ENCODE measurements at regions of chr18 and their contacts with region 1.

Region 1: DNA sequence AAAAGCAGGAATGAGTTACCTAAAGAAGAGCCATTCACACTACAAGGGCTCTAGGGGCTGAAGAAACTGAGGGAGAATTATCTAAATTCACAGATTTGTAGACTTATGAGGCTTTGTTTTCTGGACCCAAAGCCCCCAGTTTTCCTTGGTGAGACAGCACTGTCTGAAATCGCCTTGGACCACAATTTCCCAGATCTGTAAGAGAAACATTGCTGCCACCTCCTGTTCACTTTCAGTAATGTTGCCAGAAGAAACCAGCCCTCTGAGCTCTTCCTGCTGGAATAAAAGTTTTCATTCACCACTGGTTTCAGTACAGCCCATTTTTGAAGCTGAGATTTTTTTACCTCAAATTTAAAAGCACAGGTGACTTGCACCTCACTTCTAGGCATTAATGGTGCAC is 169.2 kb downstream of the CDH20 start:
- H3K4me3 Mint-ChIP-seq: no peak overlapping the region
- H3K27ac Mint-ChIP-seq: no peak overlapping the region
- H3K4me1 Mint-ChIP-seq: no peaks in the 10 kb centered on the region
- H3K27me3 Mint-ChIP-seq: peaks cover 12% of the 10 kb centered on the region

Region 2: DNA sequence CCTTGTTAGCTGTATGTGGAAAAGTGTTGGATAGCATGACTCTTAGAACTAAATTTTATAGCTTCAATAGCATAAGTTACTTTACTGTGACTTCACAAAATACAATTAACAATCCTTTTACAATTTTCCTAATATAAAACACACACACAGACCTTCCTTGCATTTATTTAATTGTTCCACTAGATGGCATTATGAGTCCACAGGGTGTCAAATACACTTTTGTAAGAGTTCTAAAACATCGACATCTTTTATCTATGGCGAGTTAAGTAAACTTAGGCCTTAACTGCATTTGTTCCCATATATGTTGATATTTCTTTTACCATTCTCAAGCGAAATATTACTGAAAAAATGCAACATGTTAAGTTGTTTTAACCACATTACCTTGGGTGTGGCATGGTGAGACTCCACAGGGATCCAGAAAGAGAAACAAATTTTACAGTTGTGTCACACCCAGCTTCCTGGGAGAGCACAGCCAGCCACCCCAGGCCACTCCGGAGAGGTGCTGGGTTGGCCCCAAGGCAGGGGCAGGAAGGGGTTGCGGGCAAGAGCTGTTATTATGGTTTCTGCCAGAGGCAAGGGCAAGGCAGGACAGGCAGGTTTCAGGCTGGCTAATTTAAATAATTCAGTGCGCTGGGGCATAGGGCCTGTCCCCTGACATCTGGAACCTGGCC is 817.5 kb before region 1 on chr18:
- intact Hi-C with region 1: loop called (anchors 5 kb)
- H3K4me3 Mint-ChIP-seq: no peak overlapping the region
- H3K27ac Mint-ChIP-seq: no peak overlapping the region
- H3K4me1 Mint-ChIP-seq: no peaks in the 10 kb centered on the region
- H3K27me3 Mint-ChIP-seq: no peaks in the 10 kb centered on the region

Region 3: GRCh38 chr18:61085761-61086160 is 416.7 kb before region 1 on chr18:
- intact Hi-C with region 1: loop called (anchors 5 kb)
- H3K4me3 Mint-ChIP-seq: no peak overlapping the region
- H3K27ac Mint-ChIP-seq: no peak overlapping the region
- H3K4me1 Mint-ChIP-seq: no peaks in the 10 kb centered on the region
- H3K27me3 Mint-ChIP-seq: no peaks in the 10 kb centered on the region

Region 4: DNA sequence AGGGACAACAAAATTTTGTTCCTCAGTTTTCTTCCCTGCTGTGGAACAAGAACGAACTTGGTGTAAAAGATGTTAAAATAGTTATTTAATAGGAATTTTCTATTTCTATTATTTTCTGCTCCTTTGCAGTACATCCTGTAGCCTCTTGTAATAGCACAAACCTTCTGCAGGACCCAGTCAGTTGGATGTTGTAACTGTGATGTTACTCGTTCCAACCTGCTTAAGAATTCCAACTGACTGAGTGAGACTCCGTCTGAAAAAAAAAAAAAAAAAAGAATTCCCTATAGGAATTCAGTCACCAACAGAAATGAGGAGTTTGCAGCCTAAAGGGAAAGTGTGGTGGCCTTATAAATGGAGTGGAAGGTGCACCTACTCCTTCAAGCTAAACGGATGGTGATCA is 215.6 kb before region 1 on chr18:
- intact Hi-C with region 1: no loop called
- H3K4me3 Mint-ChIP-seq: no peak overlapping the region
- H3K27ac Mint-ChIP-seq: no peak overlapping the region
- H3K4me1 Mint-ChIP-seq: no peaks in the 10 kb centered on the region
- H3K27me3 Mint-ChIP-seq: no peaks in the 10 kb centered on the region

Region 5: DNA sequence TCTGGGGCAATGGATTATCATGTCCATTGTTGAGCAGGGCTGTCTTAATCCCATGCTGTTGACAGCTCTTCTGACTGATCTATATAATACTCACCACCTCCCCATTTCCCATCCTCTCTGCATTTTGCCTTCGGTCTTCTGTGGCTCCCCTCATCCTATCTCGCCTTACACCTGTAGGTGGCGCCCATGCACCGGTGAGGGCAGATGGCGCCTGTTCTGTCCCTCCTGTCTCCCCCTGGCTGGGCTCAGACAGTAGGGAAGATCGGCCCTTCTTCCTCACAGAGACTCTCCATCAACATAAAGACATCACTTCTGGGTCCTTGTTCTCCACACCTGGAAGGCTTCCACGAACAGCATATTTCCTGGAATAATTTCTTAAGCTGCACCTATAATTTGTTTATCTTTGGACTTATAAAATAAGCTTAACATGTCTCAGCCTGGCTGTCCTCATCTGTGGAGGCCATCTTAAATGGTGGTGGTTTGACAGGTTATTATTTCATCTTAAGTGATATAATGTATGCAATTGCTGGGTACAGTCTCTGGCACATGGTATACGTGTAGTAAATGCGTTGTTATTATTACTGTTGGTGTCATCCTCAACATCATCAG is 180.1 kb before region 1 on chr18:
- intact Hi-C with region 1: loop called (anchors 5 kb)
- H3K4me3 Mint-ChIP-seq: no peak overlapping the region
- H3K27ac Mint-ChIP-seq: no peak overlapping the region
- H3K4me1 Mint-ChIP-seq: no peaks in the 10 kb centered on the region
- H3K27me3 Mint-ChIP-seq: peaks cover 1% of the 10 kb centered on the region

Measured in dendritic cell treated with granulocyte-macrophage colony-stimulating factor and Interleukin-4, amounts not matched to agents 40 ng/mL and 50 ng/mL, for 4 days (primary cell).